ENCODE measurements at regions of chr9 and their contacts with region 1.

Region 1: DNA sequence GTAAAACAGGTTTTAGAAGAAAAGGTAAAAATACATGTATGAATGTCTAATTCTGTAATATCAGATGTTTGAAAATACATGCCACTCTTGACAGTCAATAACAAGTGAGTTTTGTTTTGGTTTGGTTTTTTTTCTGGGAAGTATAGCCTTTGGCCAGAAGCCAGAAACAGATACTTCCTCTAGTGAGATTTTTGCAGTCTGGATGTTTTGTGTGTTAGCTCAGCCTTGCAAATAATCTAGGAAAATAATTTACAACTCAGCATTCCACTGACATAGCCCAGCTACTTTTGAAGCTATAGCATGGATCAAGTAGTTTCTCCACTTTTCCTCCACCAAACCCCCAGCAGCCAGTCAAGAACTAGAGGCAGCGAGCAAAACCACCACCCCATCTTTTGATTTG is 56.7 kb downstream of the SLC1A1 start:
- DNase-seq: no peak
- H3K4me3 ChIP-seq: no peak overlapping the region
- CTCF ChIP-seq: no peak
- POLR2A ChIP-seq: no peak

Region 2: GRCh38 chr9:4497855-4498254 is 49.2 kb before region 1 on chr9:
- intact Hi-C with region 1: loop called (anchors 2 kb)
- DNase-seq: no peak
- H3K4me3 ChIP-seq: no peak overlapping the region
- CTCF ChIP-seq: no peak
- POLR2A ChIP-seq: no peak